ENCODE measurements at regions of chr5 and their contacts with region 1.

Region 1: DNA sequence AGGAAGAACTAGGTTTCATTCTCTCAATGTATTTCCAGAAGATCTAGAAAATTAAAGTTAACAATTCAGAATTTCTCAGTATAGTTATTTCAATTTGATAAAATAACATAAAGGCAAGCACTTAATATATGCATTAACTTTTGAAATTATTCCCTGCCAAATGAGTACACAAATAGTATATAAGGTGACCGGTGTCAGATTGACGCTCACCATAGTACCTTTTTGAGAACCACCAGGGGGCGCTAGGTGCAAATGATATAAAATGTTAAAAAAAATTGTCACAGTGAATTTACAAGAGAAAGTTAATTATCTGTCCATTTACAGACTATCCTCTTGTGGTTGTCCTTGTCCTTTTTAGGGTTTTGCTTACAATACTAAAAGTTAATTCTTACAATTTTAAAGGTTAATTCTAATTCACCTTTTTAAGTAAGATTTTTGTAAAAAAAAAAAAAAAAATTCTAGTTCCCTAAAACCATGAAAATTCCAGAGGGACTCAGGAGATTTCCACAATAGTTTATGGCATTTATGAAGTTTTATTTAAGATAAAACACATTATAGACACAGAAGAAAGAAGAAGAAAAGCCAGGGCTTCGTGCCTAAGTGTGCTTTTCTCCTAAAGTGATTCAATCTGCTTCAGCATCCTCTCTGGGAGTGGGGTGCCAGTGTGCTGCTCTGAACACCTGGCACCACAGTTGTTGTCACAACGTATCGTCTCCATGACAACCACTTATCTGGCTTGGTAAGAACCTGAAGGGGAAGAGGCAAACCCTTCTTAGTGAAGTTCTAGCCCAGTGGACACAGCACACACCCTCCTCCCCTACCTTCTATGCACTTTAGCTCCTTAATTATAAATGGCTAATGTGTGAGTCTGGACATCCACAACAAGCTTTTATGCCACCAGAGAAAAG is 1.7 kb downstream of the ADAMTS16 start:
- DNase-seq: peak in 3 of 5 donors; percentile 48 to 50 (median 50)
- ATAC-seq: peak in 1 of 4 donors; percentile 60
- H3K4me3 ChIP-seq: no peak overlapping the region
- H3K27ac ChIP-seq: no peak overlapping the region
- H3K4me1 ChIP-seq: peaks cover 3 to 22% (median 8%) of the 10 kb centered on the region in 12 donors
- H3K27me3 ChIP-seq: peaks cover 15 to 38% (median 26%) of the 10 kb centered on the region in 9 donors
- CTCF ChIP-seq: peak; percentile 64 to 94 (median 81)
- POLR2A ChIP-seq: no peak

Region 2: GRCh38 chr5:5025775-5026406 is 116.0 kb before region 1 on chr5:
- intact Hi-C with region 1: no loop called
- DNase-seq: no peak
- ATAC-seq: no peak
- H3K4me3 ChIP-seq: no peak overlapping the region
- H3K27ac ChIP-seq: no peak overlapping the region
- H3K4me1 ChIP-seq: no peaks in the 10 kb centered on the region
- H3K27me3 ChIP-seq: peaks cover 0 to 7% (median 0%) of the 10 kb centered on the region in 9 donors
- CTCF ChIP-seq: no peak
- POLR2A ChIP-seq: no peak

Region 3: GRCh38 chr5:5398046-5398445 is 256.2 kb after region 1 on chr5:
- intact Hi-C with region 1: loop called in 9 of 10 experiments (anchors 2 to 5 kb)
- DNase-seq: no peak
- ATAC-seq: no peak
- H3K4me3 ChIP-seq: no peak overlapping the region
- H3K27ac ChIP-seq: no peak overlapping the region
- H3K4me1 ChIP-seq: no peaks in the 10 kb centered on the region
- H3K27me3 ChIP-seq: no peaks in the 10 kb centered on the region
- CTCF ChIP-seq: no peak
- POLR2A ChIP-seq: no peak

Region 4: DNA sequence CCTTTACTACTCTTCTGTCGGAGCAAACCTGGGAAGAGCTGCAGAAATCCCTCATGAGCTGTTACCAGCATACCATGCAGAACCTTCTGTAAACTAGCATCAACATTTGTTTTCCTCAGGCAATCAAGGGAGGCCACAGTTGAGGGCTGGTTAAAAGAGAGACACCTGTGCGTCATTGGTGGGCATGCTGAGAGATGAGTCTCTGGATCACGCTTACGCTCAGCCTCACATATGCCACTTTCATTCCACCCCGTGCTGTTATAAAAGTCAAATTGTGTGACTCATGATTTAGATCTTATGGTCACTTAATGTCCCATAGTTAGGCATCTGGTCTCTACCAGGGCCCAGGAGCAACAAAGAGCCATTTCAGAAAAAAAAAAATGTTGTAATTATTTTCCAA is 262.5 kb after region 1 on chr5:
- intact Hi-C with region 1: loop called in 6 of 10 experiments (anchors 5 kb)
- DNase-seq: no peak
- ATAC-seq: no peak
- H3K4me3 ChIP-seq: no peak overlapping the region
- H3K27ac ChIP-seq: no peak overlapping the region
- H3K4me1 ChIP-seq: no peaks in the 10 kb centered on the region
- H3K27me3 ChIP-seq: no peaks in the 10 kb centered on the region
- CTCF ChIP-seq: no peak
- POLR2A ChIP-seq: no peak

Region 5: GRCh38 chr5:5421961-5422818 is 280.3 kb after region 1 on chr5 and contains the start of gene ICE1:
- intact Hi-C with region 1: loop called (anchors 1 to 5 kb)
- DNase-seq: peak; percentile 97 to 99 (median 98)
- ATAC-seq: peak; percentile 98 to 99 (median 99)
- H3K4me3 ChIP-seq: peak within 1 kb of the TSS; percentile 62 to 100 (median 94)
- H3K27ac ChIP-seq: peak within 1 kb of the TSS; percentile 92 to 100 (median 97)
- H3K4me1 ChIP-seq: peaks cover 7 to 51% (median 37%) of the 10 kb centered on the region in 12 donors
- H3K27me3 ChIP-seq: no peaks in the 10 kb centered on the region
- CTCF ChIP-seq: peak in 3 of 12 donors; percentile 12 to 18 (median 16)
- POLR2A ChIP-seq: peak in 1 of 2 donors; percentile 75
- total RNA-seq, gene ICE1: 15.0 to 21.4 (median 19.7) TPM